Activated B cell treated with CpG ODN at 0.5 μM for 24 hours (primary cell): ENCODE measurements at regions of chr2 and their contacts with region 1.

Region 1: GRCh38 chr2:224025874-224026273 is 13.2 kb downstream of the SERPINE2 start:
- DNase-seq: peak; percentile 27
- ATAC-seq: peak; percentile 99
- H3K4me3 Mint-ChIP-seq: peak overlapping the region; percentile 53
- H3K27ac Mint-ChIP-seq: peak overlapping the region; percentile 79
- H3K4me1 Mint-ChIP-seq: peaks cover 49% of the 10 kb centered on the region
- H3K27me3 Mint-ChIP-seq: no peaks in the 10 kb centered on the region
- CTCF ChIP-seq: no peak

Region 2: DNA sequence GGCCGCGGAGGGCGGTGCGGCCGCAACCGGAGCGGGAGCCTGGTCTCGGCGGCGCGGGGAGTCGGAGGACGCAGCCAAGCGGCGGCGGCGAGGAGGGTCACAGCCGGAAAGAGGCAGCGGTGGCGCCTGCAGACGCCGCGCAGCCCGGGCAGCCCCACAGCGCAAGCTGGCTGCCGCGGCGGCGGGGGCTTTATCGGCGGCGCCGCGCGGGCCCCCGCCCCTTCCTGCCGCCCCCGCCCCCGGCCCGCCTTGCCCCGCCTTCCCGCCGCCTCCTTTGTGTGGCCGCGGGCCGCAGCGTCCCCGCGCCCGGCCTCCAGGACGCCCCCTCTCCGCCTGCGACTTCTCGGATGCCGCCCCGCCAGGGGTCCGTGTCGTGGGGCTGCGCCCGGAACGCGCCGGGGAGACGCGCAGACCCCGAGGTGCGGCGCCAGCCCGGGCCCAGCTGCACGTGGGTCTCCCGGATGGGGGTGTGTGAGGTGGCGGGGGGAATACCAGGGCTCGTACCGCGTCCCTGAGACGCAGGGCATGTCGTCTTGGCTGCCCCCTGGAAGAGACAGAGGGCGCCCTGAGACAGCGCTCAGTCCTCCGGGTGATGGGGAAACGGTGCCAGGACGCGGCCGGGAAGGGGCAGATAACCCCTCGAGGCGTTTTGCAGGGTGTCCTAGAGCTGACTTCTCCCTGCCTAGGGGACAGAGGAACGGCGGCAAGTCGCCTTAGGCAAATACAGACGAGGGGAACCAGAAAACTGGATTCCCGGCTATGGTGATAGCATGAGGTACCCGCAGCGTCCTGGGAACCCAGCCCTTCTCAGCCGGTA is 13.5 kb after region 1 on chr2 and contains the start of gene SERPINE2:
- CTCF ChIA-PET with region 1: no interaction called
- POLR2A ChIA-PET with region 1: interaction called, 4 read pairs
- intact Hi-C with region 1: loop called (anchors 1 kb)
- DNase-seq: peak; percentile 37
- ATAC-seq: peak; percentile 66
- H3K4me3 Mint-ChIP-seq: peak within 1 kb of the TSS; percentile 83
- H3K27ac Mint-ChIP-seq: no peak within 1 kb of the TSS
- H3K4me1 Mint-ChIP-seq: peaks cover 14% of the 10 kb centered on the region
- H3K27me3 Mint-ChIP-seq: peaks cover 47% of the 10 kb centered on the region
- CTCF ChIP-seq: no peak
- total RNA-seq, gene SERPINE2: 0.98 and 1.1 TPM in 2 replicates

Region 3: DNA sequence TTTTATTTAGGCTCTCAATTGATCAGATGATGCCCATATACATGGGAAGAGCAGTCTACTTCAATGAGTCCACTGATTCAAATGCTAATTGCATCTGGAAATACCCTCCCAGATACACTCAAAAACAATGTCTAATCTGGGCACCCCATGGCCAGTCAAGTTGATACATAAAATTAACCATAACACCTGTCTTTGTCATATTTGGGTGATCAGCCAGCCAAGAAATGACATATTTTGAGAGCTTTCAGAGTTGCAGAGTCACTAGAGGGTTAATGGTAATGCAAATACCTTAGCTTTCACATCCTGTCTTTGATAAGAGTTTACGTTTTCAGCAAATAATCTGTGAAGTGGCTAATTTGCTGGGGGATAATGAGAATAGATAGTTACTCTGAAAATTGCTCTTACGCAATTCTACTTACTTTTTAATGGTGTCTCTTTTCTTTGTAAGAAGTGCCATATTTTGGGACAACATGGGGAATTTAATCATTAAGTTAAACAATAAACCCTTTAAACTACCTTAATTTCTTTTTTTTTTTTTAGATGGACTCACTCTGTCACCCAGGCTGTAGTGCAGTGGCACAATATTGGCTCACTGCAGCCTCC is 641.2 kb after region 1 on chr2:
- CTCF ChIA-PET with region 1: no interaction called
- POLR2A ChIA-PET with region 1: no interaction called
- intact Hi-C with region 1: loop called (anchors 5 kb)
- DNase-seq: no peak
- ATAC-seq: peak; percentile 85
- H3K4me3 Mint-ChIP-seq: peak overlapping the region; percentile 56
- H3K27ac Mint-ChIP-seq: peak overlapping the region; percentile 68
- H3K4me1 Mint-ChIP-seq: peaks cover 19% of the 10 kb centered on the region
- H3K27me3 Mint-ChIP-seq: no peaks in the 10 kb centered on the region
- CTCF ChIP-seq: no peak